ENCODE measurements at regions of chr1 and their contacts with region 1.

Region 1: GRCh38 chr1:1796466-1796865 is 18.2 kb upstream of the NADK start:
- DNase-seq: no peak
- H3K4me3 ChIP-seq: no peak overlapping the region
- H3K27ac ChIP-seq: no peak overlapping the region
- H3K4me1 ChIP-seq: no peaks in the 10 kb centered on the region
- H3K27me3 ChIP-seq: no peaks in the 10 kb centered on the region
- CTCF ChIP-seq: peak; percentile 32 to 55 (median 48)
- EP300 ChIP-seq: no peak
- POLR2A ChIP-seq: no peak
- RAD21 ChIP-seq: peak; percentile 36 to 51; a peak in 3 of 4 replicates

Region 2: GRCh38 chr1:1721201-1721600 is 75.3 kb before region 1 on chr1:
- CTCF ChIA-PET with region 1: no interaction called
- POLR2A ChIA-PET with region 1: no interaction called
- DNase-seq: no peak
- H3K4me3 ChIP-seq: no peak overlapping the region
- H3K27ac ChIP-seq: no peak overlapping the region
- H3K4me1 ChIP-seq: no peaks in the 10 kb centered on the region
- H3K27me3 ChIP-seq: no peaks in the 10 kb centered on the region
- CTCF ChIP-seq: no peak
- EP300 ChIP-seq: no peak
- POLR2A ChIP-seq: no peak
- RAD21 ChIP-seq: no peak

Region 3: GRCh38 chr1:1806890-1807289 is 10.4 kb after region 1 on chr1:
- CTCF ChIA-PET with region 1: interaction called, 22 read pairs
- POLR2A ChIA-PET with region 1: interaction called, 6 read pairs
- DNase-seq: no peak
- H3K4me3 ChIP-seq: no peak overlapping the region
- H3K27ac ChIP-seq: no peak overlapping the region
- H3K4me1 ChIP-seq: no peaks in the 10 kb centered on the region
- H3K27me3 ChIP-seq: no peaks in the 10 kb centered on the region
- CTCF ChIP-seq: no peak
- EP300 ChIP-seq: no peak
- POLR2A ChIP-seq: no peak
- RAD21 ChIP-seq: no peak

Region 4: DNA sequence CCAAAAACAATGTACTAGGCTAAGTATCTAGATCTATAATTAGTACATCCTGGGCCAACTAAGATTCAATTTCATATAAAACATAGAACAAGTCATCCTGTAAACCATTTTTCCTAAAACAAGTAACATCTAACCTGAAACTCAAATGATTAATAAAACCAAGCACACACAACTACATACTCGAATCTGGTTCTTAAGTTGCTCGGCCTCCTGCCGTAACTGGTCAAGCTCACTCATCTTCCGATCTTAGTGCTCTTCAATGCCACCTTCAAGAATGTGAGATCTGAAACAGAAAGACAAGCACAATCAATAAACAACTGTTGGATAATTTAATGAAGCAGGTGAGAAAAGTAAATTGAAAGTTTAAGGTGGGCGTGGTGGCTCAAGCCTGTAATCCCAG is 28.8 kb after region 1 on chr1:
- CTCF ChIA-PET with region 1: interaction called, 11 read pairs
- POLR2A ChIA-PET with region 1: interaction called, 3 read pairs
- DNase-seq: no peak
- H3K4me3 ChIP-seq: no peak overlapping the region
- H3K27ac ChIP-seq: no peak overlapping the region
- H3K4me1 ChIP-seq: no peaks in the 10 kb centered on the region; a peak in 1 of 7 replicates
- H3K27me3 ChIP-seq: no peaks in the 10 kb centered on the region
- CTCF ChIP-seq: no peak
- EP300 ChIP-seq: no peak
- POLR2A ChIP-seq: no peak
- RAD21 ChIP-seq: no peak

Region 5: GRCh38 chr1:1920608-1921458 is 124.4 kb after region 1 on chr1:
- CTCF ChIA-PET with region 1: no interaction called
- POLR2A ChIA-PET with region 1: no interaction called
- DNase-seq: no peak
- H3K4me3 ChIP-seq: no peak overlapping the region
- H3K27ac ChIP-seq: no peak overlapping the region
- H3K4me1 ChIP-seq: peaks cover 0 to 15% (median 10%) of the 10 kb centered on the region in 4 experiments; a peak in 6 of 7 replicates
- H3K27me3 ChIP-seq: peaks cover 0 to 2% (median under 1%) of the 10 kb centered on the region in 4 experiments; a peak in 1 of 7 replicates
- CTCF ChIP-seq: no peak
- EP300 ChIP-seq: no peak
- POLR2A ChIP-seq: no peak
- RAD21 ChIP-seq: no peak

Measured in H1 (cell line).